ENCODE measurements at regions of chr1 and their contacts with region 1.

Region 1: DNA sequence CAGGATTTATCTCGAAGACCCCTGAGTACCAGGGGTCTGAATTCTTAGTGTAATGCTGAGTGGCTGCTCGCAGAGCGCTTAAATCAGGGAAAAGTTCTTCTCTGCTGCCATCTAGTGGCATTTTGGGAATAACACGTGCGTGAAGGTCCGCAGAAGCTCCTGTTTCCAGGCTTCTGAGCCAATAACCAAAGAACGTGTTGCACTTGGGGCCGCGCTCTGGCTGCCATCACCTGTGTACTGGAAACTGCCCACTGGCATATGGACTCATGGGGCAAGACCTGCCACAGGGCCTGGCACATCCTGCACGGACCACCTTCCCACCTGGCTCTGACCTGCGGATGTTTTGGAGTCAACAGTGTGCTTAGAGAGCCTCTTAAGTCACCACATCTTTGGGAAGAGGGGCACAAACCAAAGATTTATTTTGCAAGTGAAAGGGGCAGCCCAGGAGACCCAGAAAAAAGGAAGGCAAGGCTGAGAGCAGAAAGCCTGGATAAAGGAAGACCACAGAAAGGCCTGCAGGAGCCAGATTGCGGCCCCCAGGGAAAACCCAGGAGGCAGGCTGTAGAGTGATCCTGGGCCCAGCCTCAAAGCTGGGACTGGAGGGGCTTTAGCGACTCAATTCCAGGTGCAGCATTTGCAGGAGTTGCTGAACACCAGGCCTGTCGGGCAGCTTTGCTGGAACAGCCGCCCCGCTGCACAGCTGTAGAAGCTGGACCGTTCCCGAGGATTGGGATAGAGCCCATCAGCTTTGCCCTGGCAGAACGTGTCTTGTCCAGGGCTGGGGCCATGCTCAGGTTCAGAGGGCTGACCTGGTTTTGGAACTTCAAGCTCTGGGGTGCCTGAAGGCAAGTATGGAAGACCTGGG is 13.0 kb downstream of the CHIT1 start:
- DNase-seq: no peak
- H3K4me3 ChIP-seq: no peak overlapping the region
- H3K27ac ChIP-seq: no peak overlapping the region
- H3K4me1 ChIP-seq: peaks cover 0 to 5% (median 0%) of the 10 kb centered on the region in 3 donors
- H3K27me3 ChIP-seq: peaks cover 0 to 22% (median 0%) of the 10 kb centered on the region in 4 donors
- CTCF ChIP-seq: peak; percentile 66 to 84 (median 70)
- POLR2A ChIP-seq: no peak

Region 2: GRCh38 chr1:203038891-203039608 is 177.5 kb before region 1 on chr1:
- intact Hi-C with region 1: loop called (anchors 5 kb)
- DNase-seq: no peak
- H3K4me3 ChIP-seq: no peak overlapping the region
- H3K27ac ChIP-seq: peak overlapping the region in 1 of 4 donors; percentile 39
- H3K4me1 ChIP-seq: peaks cover 0 to 9% (median 0%) of the 10 kb centered on the region in 3 donors
- H3K27me3 ChIP-seq: peaks cover 0 to 23% (median 0%) of the 10 kb centered on the region in 4 donors
- CTCF ChIP-seq: peak; percentile 52 to 92 (median 88)
- POLR2A ChIP-seq: no peak

Region 3: GRCh38 chr1:203117611-203118575 is 98.6 kb before region 1 on chr1:
- intact Hi-C with region 1: loop called (anchors 5 kb)
- DNase-seq: no peak
- H3K4me3 ChIP-seq: peak overlapping the region in 1 of 4 donors; percentile 15
- H3K27ac ChIP-seq: no peak overlapping the region
- H3K4me1 ChIP-seq: peaks cover 3 to 9% (median 4%) of the 10 kb centered on the region in 3 donors
- H3K27me3 ChIP-seq: peaks cover 0 to 74% (median 3%) of the 10 kb centered on the region in 4 donors
- CTCF ChIP-seq: peak; percentile 15 to 66 (median 60)
- POLR2A ChIP-seq: no peak

Region 4: DNA sequence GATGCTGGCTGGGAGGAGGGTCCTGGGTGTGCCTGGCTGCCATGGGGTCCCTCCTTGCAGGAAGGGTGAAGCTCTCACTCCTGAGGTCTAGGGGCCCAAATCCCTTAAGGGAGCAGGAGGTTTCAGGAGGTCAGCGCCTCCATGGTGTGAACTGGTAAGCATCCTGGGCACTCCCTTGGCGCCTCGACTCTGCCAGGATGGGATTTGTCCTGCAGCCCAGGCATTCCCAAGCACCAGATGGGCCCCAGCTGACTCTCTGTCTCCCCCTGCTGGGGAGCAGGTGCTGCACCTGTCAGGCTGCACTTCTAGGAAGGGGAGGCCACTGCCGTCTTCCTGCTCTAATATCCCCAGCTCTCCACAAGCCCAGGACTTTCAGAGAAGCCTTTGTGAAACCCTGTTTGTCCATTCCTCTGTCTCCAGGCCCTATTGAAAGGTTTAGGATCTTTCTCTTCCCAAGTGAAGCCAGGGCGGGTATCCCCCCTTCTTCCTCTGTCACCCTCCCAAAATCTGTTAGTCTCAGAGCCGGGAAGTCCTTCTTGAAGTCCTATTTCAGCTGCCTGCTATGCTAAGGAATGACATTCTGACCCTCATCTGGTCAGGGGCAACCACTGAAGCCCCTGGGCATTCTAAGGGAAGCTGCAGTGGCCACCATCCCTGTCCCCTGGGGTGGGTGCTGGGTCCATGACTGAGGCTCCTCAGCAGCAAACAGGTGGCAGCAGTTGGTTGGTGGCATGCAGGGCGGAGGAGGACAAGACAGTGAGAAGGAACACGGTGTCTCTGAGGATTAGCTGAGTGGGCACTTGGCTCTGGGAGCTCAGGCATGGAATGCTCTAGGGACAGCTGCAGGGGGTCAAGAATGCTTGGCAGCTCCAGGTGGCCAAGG is 44.1 kb before region 1 on chr1:
- intact Hi-C with region 1: no loop called
- DNase-seq: no peak
- H3K4me3 ChIP-seq: no peak overlapping the region
- H3K27ac ChIP-seq: no peak overlapping the region
- H3K4me1 ChIP-seq: peaks cover 0 to 29% (median 2%) of the 10 kb centered on the region in 3 donors
- H3K27me3 ChIP-seq: peaks cover 0 to 19% (median 0%) of the 10 kb centered on the region in 4 donors
- CTCF ChIP-seq: peak in 5 of 6 experiments; percentile 65 to 90 (median 74)
- POLR2A ChIP-seq: no peak

Region 5: GRCh38 chr1:203273206-203273868 is 56.8 kb after region 1 on chr1:
- intact Hi-C with region 1: no loop called
- DNase-seq: peak; percentile 51
- H3K4me3 ChIP-seq: peak overlapping the region; percentile 4 to 54 (median 25)
- H3K27ac ChIP-seq: peak overlapping the region; percentile 83 to 95 (median 92)
- H3K4me1 ChIP-seq: peaks cover 30 to 85% (median 61%) of the 10 kb centered on the region in 3 donors
- H3K27me3 ChIP-seq: no peaks in the 10 kb centered on the region
- CTCF ChIP-seq: peak; percentile 98 to 100 (median 99)
- POLR2A ChIP-seq: peak in 2 of 4 donors; percentile 44 to 61

Region 6: GRCh38 chr1:203440771-203441170 is 224.3 kb after region 1 on chr1:
- intact Hi-C with region 1: no loop called
- DNase-seq: no peak
- H3K4me3 ChIP-seq: no peak overlapping the region
- H3K27ac ChIP-seq: peak overlapping the region in 3 of 4 donors; percentile 62 to 68 (median 63)
- H3K4me1 ChIP-seq: peaks cover 0 to 27% (median 9%) of the 10 kb centered on the region in 3 donors
- H3K27me3 ChIP-seq: peaks cover 0 to 6% (median 0%) of the 10 kb centered on the region in 4 donors
- CTCF ChIP-seq: peak in 4 of 6 experiments; percentile 24 to 54 (median 46)
- POLR2A ChIP-seq: no peak